Heart left ventricle (tissue), 16 donors: ENCODE measurements at regions of chr9 and their contacts with region 1.

Region 1: GRCh38 chr9:92749934-92750315 is 14.7 kb downstream of the BICD2 start:
- DNase-seq: no peak
- ATAC-seq: peak in 2 of 4 donors; percentile 33 to 61
- H3K4me3 ChIP-seq: no peak overlapping the region
- H3K27ac ChIP-seq: peak overlapping the region in 11 of 12 donors; percentile 6 to 71 (median 45)
- H3K4me1 ChIP-seq: peaks cover 17 to 90% (median 61%) of the 10 kb centered on the region in 12 donors
- H3K27me3 ChIP-seq: no peaks in the 10 kb centered on the region
- CTCF ChIP-seq: no peak
- POLR2A ChIP-seq: no peak

Region 2: DNA sequence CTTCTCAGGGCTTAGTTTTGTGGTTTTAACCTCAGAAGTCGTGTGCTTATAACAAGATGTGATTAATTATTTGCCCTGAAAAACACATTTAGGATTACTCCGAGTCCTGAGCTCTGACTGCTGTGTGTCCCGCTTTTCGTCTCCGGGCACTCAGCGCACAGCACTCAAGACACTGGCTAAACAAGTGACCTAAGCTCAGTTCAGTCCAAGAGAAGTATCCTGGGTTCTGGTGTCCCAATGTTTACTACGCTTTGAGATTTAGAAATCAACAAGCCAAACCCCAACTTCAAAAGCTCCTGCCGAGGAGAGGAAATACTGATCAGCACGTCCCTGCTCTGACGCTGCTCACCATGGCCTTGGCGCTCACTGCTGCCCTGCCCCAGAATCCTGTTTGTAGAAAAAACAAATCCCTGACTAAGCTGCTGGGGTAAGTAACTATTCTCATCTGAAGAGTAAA is 133.2 kb before region 1 on chr9:
- intact Hi-C with region 1: no loop called
- DNase-seq: peak in 1 of 5 donors; percentile 36
- ATAC-seq: peak; percentile 19 to 50 (median 42)
- H3K4me3 ChIP-seq: no peak overlapping the region
- H3K27ac ChIP-seq: peak overlapping the region; percentile 31 to 82 (median 63)
- H3K4me1 ChIP-seq: peaks cover 0 to 47% (median 5%) of the 10 kb centered on the region in 12 donors
- H3K27me3 ChIP-seq: no peaks in the 10 kb centered on the region
- CTCF ChIP-seq: no peak
- POLR2A ChIP-seq: no peak

Region 3: GRCh38 chr9:92671323-92671722 is 78.6 kb before region 1 on chr9:
- intact Hi-C with region 1: no loop called
- DNase-seq: peak in 4 of 5 donors; percentile 33 to 58 (median 39)
- ATAC-seq: no peak
- H3K4me3 ChIP-seq: peak overlapping the region in 9 of 12 donors; percentile 78 to 98 (median 93)
- H3K27ac ChIP-seq: peak overlapping the region in 2 of 12 donors; percentile 12 to 98
- H3K4me1 ChIP-seq: peaks cover 0 to 38% (median 20%) of the 10 kb centered on the region in 12 donors
- H3K27me3 ChIP-seq: no peaks in the 10 kb centered on the region
- CTCF ChIP-seq: no peak
- POLR2A ChIP-seq: no peak

Region 4: GRCh38 chr9:92738661-92739081 is 11.3 kb before region 1 on chr9:
- intact Hi-C with region 1: loop called in 1 of 10 experiments (anchors 1 kb)
- DNase-seq: peak in 1 of 5 donors; percentile 49
- ATAC-seq: peak; percentile 13 to 53 (median 26)
- H3K4me3 ChIP-seq: no peak overlapping the region
- H3K27ac ChIP-seq: peak overlapping the region in 11 of 12 donors; percentile 20 to 91 (median 66)
- H3K4me1 ChIP-seq: peaks cover 14 to 91% (median 77%) of the 10 kb centered on the region in 12 donors
- H3K27me3 ChIP-seq: no peaks in the 10 kb centered on the region
- CTCF ChIP-seq: no peak
- POLR2A ChIP-seq: no peak